ENCODE measurements at regions of chr11 and their contacts with region 1.

Region 1: GRCh38 chr11:11931461-11932055 is 76.9 kb downstream of the DKK3 start:
- DNase-seq: no peak
- ATAC-seq: peak; percentile 39 to 77
- H3K4me3 ChIP-seq: no peak overlapping the region
- H3K27ac ChIP-seq: no peak overlapping the region
- H3K4me1 ChIP-seq: no peaks in the 10 kb centered on the region
- H3K27me3 ChIP-seq: no peaks in the 10 kb centered on the region
- CTCF ChIP-seq: peak; percentile 40 to 55 (median 49)
- POLR2A ChIP-seq: no peak

Region 2: DNA sequence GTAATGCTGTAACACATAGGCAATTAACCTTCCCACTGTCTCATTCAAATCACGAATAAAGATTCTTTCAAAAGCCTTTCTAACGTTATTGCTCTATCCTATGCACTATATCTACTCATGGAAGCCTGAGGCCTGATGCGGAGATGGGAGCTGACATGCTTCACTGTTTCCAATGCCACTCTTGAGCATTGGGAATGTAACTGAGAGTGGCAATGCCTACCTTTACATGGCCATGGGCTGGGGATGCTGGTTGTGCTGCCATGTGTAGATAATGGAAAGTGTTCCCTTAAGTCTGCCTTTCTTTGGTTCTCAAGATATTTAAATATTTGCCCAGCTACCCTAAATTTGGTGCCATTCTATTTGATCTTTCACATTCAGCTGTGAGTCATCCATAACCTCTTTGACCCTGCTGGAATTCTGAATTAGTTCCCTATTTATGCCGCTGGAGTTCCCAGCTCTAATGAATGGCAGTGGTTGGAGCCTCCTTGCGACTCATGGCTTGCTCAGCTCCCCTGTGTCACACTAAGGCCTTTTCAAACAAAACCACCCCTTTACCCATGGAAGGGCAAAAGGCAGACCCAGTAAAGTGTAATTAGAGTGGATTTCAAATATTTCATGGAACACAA is 98.3 kb after region 1 on chr11:
- in situ Hi-C with region 1: loop called in 3 of 4 experiments (anchors 5 to 25 kb)
- intact Hi-C with region 1: no loop called
- DNase-seq: no peak
- ATAC-seq: no peak
- H3K4me3 ChIP-seq: no peak overlapping the region
- H3K27ac ChIP-seq: no peak overlapping the region
- H3K4me1 ChIP-seq: peaks cover 6 to 13% of the 10 kb centered on the region in 2 donors
- H3K27me3 ChIP-seq: no peaks in the 10 kb centered on the region
- CTCF ChIP-seq: no peak
- POLR2A ChIP-seq: no peak

Region 3: GRCh38 chr11:12281571-12282478 is 350.3 kb after region 1 on chr11:
- in situ Hi-C with region 1: loop called in 3 of 4 experiments (anchors 10 to 25 kb)
- intact Hi-C with region 1: loop called (anchors 10 kb)
- DNase-seq: peak; percentile 61 to 74
- ATAC-seq: peak; percentile 73 to 88
- H3K4me3 ChIP-seq: no peak overlapping the region
- H3K27ac ChIP-seq: no peak overlapping the region
- H3K4me1 ChIP-seq: peaks cover 3 to 4% of the 10 kb centered on the region in 2 donors
- H3K27me3 ChIP-seq: no peaks in the 10 kb centered on the region
- CTCF ChIP-seq: peak; percentile 95 to 97 (median 97)
- POLR2A ChIP-seq: no peak